ENCODE measurements at regions of chr2 and their contacts with region 1.

Region 1: GRCh38 chr2:82317012-82317411 is 2012.5 kb upstream of the LRRTM1 start:
- DNase-seq: no peak
- ATAC-seq: no peak

Region 2: DNA sequence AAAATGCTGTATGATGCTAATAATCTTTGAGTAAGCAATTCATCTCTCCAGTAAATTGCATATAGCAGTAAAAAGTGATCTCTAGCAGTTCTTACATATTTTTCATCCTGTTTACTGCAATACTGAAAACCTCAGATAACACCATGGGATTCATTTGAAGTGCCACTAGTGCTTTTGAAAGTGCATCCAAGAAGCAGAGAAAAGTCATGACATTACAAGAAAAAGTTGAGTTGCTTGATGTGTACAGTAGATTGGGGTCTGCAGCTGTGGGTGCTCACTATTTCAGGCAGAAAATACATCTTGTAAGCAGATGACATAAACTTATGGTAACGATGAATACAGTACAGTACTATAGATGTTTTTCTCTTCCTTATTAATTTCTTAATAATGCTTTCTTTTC is 27.6 kb before region 1 on chr2:
- intact Hi-C with region 1: loop called (anchors 2 kb)
- DNase-seq: no peak
- ATAC-seq: no peak